ENCODE measurements at regions of chr17 and their contacts with region 1.

Region 1: GRCh38 chr17:65712383-65713267 is 151.2 kb upstream of the AXIN2 start:
- DNase-seq: no peak
- ATAC-seq: peak; percentile 89
- H3K4me3 ChIP-seq: no peak overlapping the region
- H3K27ac ChIP-seq: no peak overlapping the region
- H3K4me1 ChIP-seq: no peaks in the 10 kb centered on the region
- H3K27me3 ChIP-seq: no peaks in the 10 kb centered on the region
- CTCF ChIP-seq: no peak
- EP300 ChIP-seq: no peak
- POLR2A ChIP-seq: no peak
- RAD21 ChIP-seq: no peak

Region 2: DNA sequence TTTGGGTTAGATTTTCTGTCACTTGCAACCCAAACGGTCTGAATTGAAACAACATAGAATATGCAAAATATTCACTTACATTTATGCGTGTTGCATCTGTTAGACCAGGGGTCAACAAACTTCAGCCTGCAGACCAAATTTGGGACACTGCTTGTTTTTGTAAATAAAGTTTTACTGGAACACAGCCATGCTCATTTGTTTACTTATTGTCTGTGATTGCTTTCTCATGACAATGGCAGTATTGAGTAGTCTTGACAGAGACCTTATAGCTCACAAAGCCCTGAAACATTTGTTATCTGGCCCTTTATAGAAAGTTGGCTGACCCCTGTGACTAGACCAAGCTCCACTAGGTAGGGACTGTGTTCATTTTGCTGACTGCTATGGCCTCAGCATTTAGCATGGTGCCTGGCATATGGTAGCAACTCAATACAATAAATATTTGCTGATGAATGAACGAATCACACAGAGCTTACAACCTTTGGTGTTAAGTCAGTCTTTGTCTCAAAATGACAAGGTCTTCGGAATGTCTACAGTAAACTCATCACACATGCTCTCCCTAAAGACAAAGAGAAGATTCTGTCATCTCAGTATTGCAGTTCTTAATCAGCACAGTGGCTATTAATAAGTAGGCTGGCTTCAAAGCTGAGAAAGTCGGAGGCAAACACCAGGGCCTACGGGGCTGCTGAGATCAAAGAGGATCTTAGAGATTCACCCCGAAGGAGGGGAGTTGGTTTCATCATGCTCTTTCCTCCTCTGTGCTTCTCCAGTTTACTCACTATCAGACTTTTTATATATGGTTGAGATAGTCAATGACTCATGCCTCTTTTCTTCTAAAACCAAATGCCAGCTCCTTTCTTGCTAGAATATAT is 56.0 kb before region 1 on chr17:
- CTCF ChIA-PET with region 1: no interaction called
- POLR2A ChIA-PET with region 1: interaction called, 3 read pairs
- RAD21 ChIA-PET with region 1: interaction called, 16 read pairs
- SMC1A ChIA-PET with region 1: interaction called, 13 read pairs
- in situ Hi-C with region 1: no loop called
- intact Hi-C with region 1: no loop called
- DNase-seq: peak; percentile 39
- ATAC-seq: peak; percentile 95
- H3K4me3 ChIP-seq: no peak overlapping the region
- H3K27ac ChIP-seq: 0 out of 2 replicates have a peak overlapping the region, but pooled peaks have one; percentile 4
- H3K4me1 ChIP-seq: peaks cover 4% of the 10 kb centered on the region; the same call in 1 of the 2 replicates
- H3K27me3 ChIP-seq: no peaks in the 10 kb centered on the region
- CTCF ChIP-seq: no peak
- EP300 ChIP-seq: peak; percentile 32 to 63; a peak in 2 of 4 replicates
- POLR2A ChIP-seq: no peak
- RAD21 ChIP-seq: no peak

Region 3: DNA sequence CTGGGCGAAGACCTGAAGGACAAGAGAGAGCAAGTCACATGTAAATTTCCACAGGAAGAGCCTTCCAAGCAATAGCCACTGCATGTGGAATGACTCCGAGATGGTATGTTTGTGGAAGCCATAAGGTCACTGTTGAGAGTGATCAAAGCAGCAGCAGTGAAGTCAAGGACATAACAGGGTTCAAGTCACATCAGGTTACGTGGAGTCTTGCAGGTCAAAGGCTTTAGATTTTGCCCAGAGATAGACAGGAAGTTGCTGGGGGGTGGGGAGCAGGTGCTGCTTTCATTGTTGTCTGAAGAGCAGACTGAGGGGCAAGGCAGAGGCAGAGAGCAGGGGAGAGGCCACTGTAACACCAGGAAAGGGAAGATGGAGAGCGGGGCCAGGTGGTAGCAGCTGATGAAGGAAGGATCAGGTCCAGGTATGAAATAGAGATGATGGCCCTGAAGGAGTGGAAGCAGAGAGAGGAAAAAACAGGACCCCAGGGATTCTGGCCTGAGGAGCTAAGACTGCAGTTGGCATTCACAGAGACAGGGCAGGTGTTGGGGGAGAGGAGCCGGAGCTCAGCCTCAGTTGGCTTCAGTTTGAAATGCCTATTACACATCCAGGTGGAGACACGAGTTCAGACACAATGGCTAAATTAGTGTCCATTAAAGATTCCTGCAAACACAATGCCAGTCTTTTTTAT is 21.9 kb before region 1 on chr17:
- CTCF ChIA-PET with region 1: interaction called, 3 read pairs
- POLR2A ChIA-PET with region 1: no interaction called
- RAD21 ChIA-PET with region 1: interaction called, 4 read pairs
- SMC1A ChIA-PET with region 1: interaction called, 10 read pairs
- in situ Hi-C with region 1: no loop called
- intact Hi-C with region 1: no loop called
- DNase-seq: no peak
- ATAC-seq: peak; percentile 40; the same call in 2 of the 3 replicates
- H3K4me3 ChIP-seq: no peak overlapping the region
- H3K27ac ChIP-seq: no peak overlapping the region
- H3K4me1 ChIP-seq: no peaks in the 10 kb centered on the region
- H3K27me3 ChIP-seq: no peaks in the 10 kb centered on the region
- CTCF ChIP-seq: no peak
- EP300 ChIP-seq: no peak
- POLR2A ChIP-seq: no peak
- RAD21 ChIP-seq: no peak

Region 4: DNA sequence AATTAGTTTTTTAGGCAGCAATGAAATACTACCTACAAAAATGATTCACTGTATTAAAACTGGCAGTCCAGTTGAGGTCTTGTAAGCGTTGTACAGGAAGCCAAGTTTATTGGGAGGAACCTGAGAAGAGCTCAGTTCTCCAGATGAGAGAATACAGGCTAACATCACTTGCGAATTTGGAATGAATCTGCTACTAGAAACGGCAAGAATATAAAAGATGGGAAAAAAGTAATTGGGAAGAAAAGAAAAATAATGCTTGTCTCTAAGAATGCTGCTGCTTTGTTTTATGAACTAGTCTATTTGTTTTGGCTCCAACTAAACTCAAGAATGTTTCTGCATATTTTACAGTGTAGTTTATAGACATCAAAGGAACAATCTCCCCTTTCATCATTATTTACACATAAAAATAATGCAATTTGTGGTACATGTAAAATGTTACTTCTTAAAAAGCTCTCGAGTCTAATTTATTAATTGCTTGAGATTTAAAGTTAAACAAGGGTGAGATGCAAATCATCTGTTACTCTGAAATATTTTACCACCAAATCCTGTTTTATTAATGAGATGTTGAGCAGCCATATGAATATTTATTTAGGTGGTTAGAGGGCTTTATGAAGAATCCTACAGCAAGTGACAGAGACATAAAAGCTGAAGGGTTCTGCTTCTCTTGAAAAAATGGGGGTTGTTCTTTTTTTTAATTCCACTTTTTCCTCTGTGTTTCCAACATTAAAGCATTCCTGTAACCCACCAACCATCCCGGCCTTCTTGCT is 10.9 kb after region 1 on chr17:
- CTCF ChIA-PET with region 1: interaction called, 6 read pairs
- POLR2A ChIA-PET with region 1: interaction called, 5 read pairs
- RAD21 ChIA-PET with region 1: interaction called, 3 read pairs
- SMC1A ChIA-PET with region 1: interaction called, 15 read pairs
- in situ Hi-C with region 1: no loop called
- intact Hi-C with region 1: no loop called
- DNase-seq: no peak
- ATAC-seq: no peak
- H3K4me3 ChIP-seq: no peak overlapping the region
- H3K27ac ChIP-seq: no peak overlapping the region
- H3K4me1 ChIP-seq: no peaks in the 10 kb centered on the region
- H3K27me3 ChIP-seq: no peaks in the 10 kb centered on the region; a peak in 1 of 4 replicates
- CTCF ChIP-seq: no peak
- EP300 ChIP-seq: no peak
- POLR2A ChIP-seq: no peak
- RAD21 ChIP-seq: no peak

Region 5: GRCh38 chr17:65763786-65764185 is 51.2 kb after region 1 on chr17:
- CTCF ChIA-PET with region 1: no interaction called
- POLR2A ChIA-PET with region 1: no interaction called
- RAD21 ChIA-PET with region 1: interaction called, 4 read pairs
- SMC1A ChIA-PET with region 1: interaction called, 11 read pairs
- in situ Hi-C with region 1: no loop called
- intact Hi-C with region 1: no loop called
- DNase-seq: no peak
- ATAC-seq: peak; percentile 74
- H3K4me3 ChIP-seq: no peak overlapping the region
- H3K27ac ChIP-seq: no peak overlapping the region
- H3K4me1 ChIP-seq: no peaks in the 10 kb centered on the region
- H3K27me3 ChIP-seq: no peaks in the 10 kb centered on the region
- CTCF ChIP-seq: no peak
- EP300 ChIP-seq: no peak
- POLR2A ChIP-seq: no peak
- RAD21 ChIP-seq: no peak

Region 6: GRCh38 chr17:65771704-65772103 is 59.1 kb after region 1 on chr17:
- CTCF ChIA-PET with region 1: no interaction called
- POLR2A ChIA-PET with region 1: no interaction called
- RAD21 ChIA-PET with region 1: interaction called, 3 read pairs
- SMC1A ChIA-PET with region 1: interaction called, 17 read pairs
- in situ Hi-C with region 1: no loop called
- intact Hi-C with region 1: no loop called
- DNase-seq: no peak
- ATAC-seq: no peak
- H3K4me3 ChIP-seq: no peak overlapping the region
- H3K27ac ChIP-seq: no peak overlapping the region
- H3K4me1 ChIP-seq: no peaks in the 10 kb centered on the region
- H3K27me3 ChIP-seq: no peaks in the 10 kb centered on the region
- CTCF ChIP-seq: no peak
- EP300 ChIP-seq: no peak
- POLR2A ChIP-seq: no peak
- RAD21 ChIP-seq: no peak